Heart left ventricle (tissue), 16 donors: ENCODE measurements at regions of chr7 and their contacts with region 1.

Region 1: DNA sequence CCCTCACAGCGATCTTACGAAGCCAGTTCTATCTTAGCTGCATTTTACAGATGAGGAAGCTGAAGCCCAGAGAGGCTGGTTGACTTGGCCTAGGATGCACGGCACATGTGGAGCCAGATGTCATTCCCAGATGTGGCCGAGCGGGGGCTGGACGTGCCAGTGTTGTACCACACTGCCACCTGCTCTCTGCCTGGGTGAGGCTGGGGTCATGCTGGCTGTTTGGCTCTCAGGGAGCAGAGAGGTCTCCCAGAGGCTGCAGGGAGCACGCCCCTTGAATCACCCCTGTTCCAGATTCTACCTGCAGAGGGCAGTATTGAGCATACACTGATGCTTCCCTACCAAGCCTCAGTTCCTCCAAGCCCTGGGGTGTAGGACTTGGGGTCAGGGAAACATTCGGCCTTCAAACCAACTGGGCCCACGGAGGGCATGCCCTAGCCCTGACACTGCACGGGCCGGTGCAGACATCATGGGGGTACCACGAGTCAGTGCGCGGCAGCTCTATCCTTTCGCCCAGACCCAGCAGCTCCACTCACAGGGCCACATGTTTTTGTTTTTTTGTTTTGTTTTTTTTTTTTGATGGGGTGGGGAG is 3.8 kb upstream of the GTF2IRD1 start:
- DNase-seq: peak in 4 of 5 donors; percentile 43 to 49 (median 48)
- ATAC-seq: peak in 3 of 4 donors; percentile 15 to 44 (median 39)
- H3K4me3 ChIP-seq: no peak overlapping the region
- H3K27ac ChIP-seq: no peak overlapping the region
- H3K4me1 ChIP-seq: peaks cover 0 to 24% (median 7%) of the 10 kb centered on the region in 12 donors
- H3K27me3 ChIP-seq: peaks cover 0 to 3% (median 0%) of the 10 kb centered on the region in 9 donors
- CTCF ChIP-seq: peak; percentile 68 to 88 (median 82)
- POLR2A ChIP-seq: no peak

Region 2: GRCh38 chr7:74479961-74480829 is 30.3 kb after region 1 on chr7:
- intact Hi-C with region 1: loop called in 3 of 10 experiments (anchors 1 to 2 kb)
- DNase-seq: peak; percentile 83 to 94 (median 88)
- ATAC-seq: peak; percentile 46 to 74 (median 68)
- H3K4me3 ChIP-seq: peak overlapping the region; percentile 4 to 63 (median 54)
- H3K27ac ChIP-seq: peak overlapping the region; percentile 83 to 99 (median 94)
- H3K4me1 ChIP-seq: peaks cover 0 to 76% (median 53%) of the 10 kb centered on the region in 12 donors
- H3K27me3 ChIP-seq: no peaks in the 10 kb centered on the region
- CTCF ChIP-seq: no peak
- POLR2A ChIP-seq: peak; percentile 14 to 74

Region 3: GRCh38 chr7:74525880-74526279 is 76.0 kb after region 1 on chr7:
- intact Hi-C with region 1: loop called in 2 of 10 experiments (anchors 10 kb)
- DNase-seq: peak in 1 of 5 donors; percentile 10
- ATAC-seq: peak in 1 of 4 donors; percentile 16
- H3K4me3 ChIP-seq: no peak overlapping the region
- H3K27ac ChIP-seq: no peak overlapping the region
- H3K4me1 ChIP-seq: no peaks in the 10 kb centered on the region
- H3K27me3 ChIP-seq: no peaks in the 10 kb centered on the region
- CTCF ChIP-seq: no peak
- POLR2A ChIP-seq: no peak

Region 4: GRCh38 chr7:74544706-74545469 is 95.0 kb after region 1 on chr7:
- intact Hi-C with region 1: loop called in 2 of 10 experiments (anchors 5 to 10 kb)
- DNase-seq: no peak
- ATAC-seq: no peak
- H3K4me3 ChIP-seq: no peak overlapping the region
- H3K27ac ChIP-seq: no peak overlapping the region
- H3K4me1 ChIP-seq: peaks cover 0 to 6% (median 0%) of the 10 kb centered on the region in 12 donors
- H3K27me3 ChIP-seq: no peaks in the 10 kb centered on the region
- CTCF ChIP-seq: peak in 8 of 12 donors; percentile 11 to 42 (median 24)
- POLR2A ChIP-seq: no peak

Region 5: GRCh38 chr7:74569501-74570075 is 119.7 kb after region 1 on chr7:
- intact Hi-C with region 1: loop called in 5 of 10 experiments (anchors 5 to 10 kb)
- DNase-seq: no peak
- ATAC-seq: no peak
- H3K4me3 ChIP-seq: no peak overlapping the region
- H3K27ac ChIP-seq: no peak overlapping the region
- H3K4me1 ChIP-seq: peaks cover 0 to 6% (median 0%) of the 10 kb centered on the region in 12 donors
- H3K27me3 ChIP-seq: no peaks in the 10 kb centered on the region
- CTCF ChIP-seq: no peak
- POLR2A ChIP-seq: no peak